Activated CD4-positive, alpha-beta memory T cell treated with anti-CD3 and anti-CD28 coated beads for 36 hours (primary cell): ENCODE measurements at regions of chr3 and their contacts with region 1.

Region 1: GRCh38 chr3:4834403-4834866 is 144.8 kb upstream of the BHLHE40 start:
- DNase-seq: peak; percentile 90
- H3K4me3 Mint-ChIP-seq: peak overlapping the region; percentile 49
- H3K27ac Mint-ChIP-seq: peak overlapping the region; percentile 84
- H3K4me1 Mint-ChIP-seq: peaks cover 86% of the 10 kb centered on the region
- H3K27me3 Mint-ChIP-seq: no peaks in the 10 kb centered on the region

Region 2: DNA sequence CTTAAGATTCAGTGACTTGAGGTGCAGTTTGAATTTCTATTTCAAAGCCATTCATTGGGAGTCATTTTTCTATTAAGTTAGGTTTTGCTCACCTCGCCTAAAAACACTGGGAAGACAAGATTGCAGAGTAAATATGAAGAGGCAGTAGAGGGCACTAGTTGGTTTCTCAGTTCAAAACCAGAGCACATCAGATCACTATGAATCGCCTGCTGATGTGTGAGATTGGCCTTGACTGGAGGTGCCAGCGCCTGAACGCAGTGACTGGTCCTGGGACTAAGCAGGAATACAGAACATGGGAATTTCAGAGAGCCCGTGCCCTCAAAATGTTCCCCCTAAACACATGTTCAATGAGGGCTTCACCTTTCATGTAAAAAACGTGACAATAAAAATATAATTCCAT is 112.3 kb before region 1 on chr3:
- CTCF ChIA-PET with region 1: interaction called, 3 read pairs
- POLR2A ChIA-PET with region 1: no interaction called
- intact Hi-C with region 1: loop called (anchors 5 kb)
- DNase-seq: peak; percentile 41
- H3K4me3 Mint-ChIP-seq: no peak overlapping the region
- H3K27ac Mint-ChIP-seq: no peak overlapping the region
- H3K4me1 Mint-ChIP-seq: peaks cover 19% of the 10 kb centered on the region
- H3K27me3 Mint-ChIP-seq: no peaks in the 10 kb centered on the region

Region 3: GRCh38 chr3:4807381-4808280 is 26.8 kb before region 1 on chr3:
- CTCF ChIA-PET with region 1: interaction called, 7 read pairs
- POLR2A ChIA-PET with region 1: interaction called, 9 read pairs
- intact Hi-C with region 1: loop called (anchors 1 kb)
- DNase-seq: no peak
- H3K4me3 Mint-ChIP-seq: peak overlapping the region; percentile 45
- H3K27ac Mint-ChIP-seq: peak overlapping the region; percentile 4
- H3K4me1 Mint-ChIP-seq: peaks cover 42% of the 10 kb centered on the region
- H3K27me3 Mint-ChIP-seq: no peaks in the 10 kb centered on the region

Region 4: GRCh38 chr3:4888913-4889846 is 54.7 kb after region 1 on chr3:
- CTCF ChIA-PET with region 1: no interaction called
- POLR2A ChIA-PET with region 1: interaction called, 3 read pairs
- intact Hi-C with region 1: loop called (anchors 1 kb)
- DNase-seq: peak; percentile 67
- H3K4me3 Mint-ChIP-seq: no peak overlapping the region
- H3K27ac Mint-ChIP-seq: peak overlapping the region; percentile 90
- H3K4me1 Mint-ChIP-seq: peaks cover 31% of the 10 kb centered on the region
- H3K27me3 Mint-ChIP-seq: no peaks in the 10 kb centered on the region

Region 5: GRCh38 chr3:5165698-5166097 is 331.3 kb after region 1 on chr3:
- CTCF ChIA-PET with region 1: no interaction called
- POLR2A ChIA-PET with region 1: no interaction called
- intact Hi-C with region 1: no loop called
- DNase-seq: no peak
- H3K4me3 Mint-ChIP-seq: no peak overlapping the region
- H3K27ac Mint-ChIP-seq: no peak overlapping the region
- H3K4me1 Mint-ChIP-seq: peaks cover 65% of the 10 kb centered on the region
- H3K27me3 Mint-ChIP-seq: no peaks in the 10 kb centered on the region

Region 6: DNA sequence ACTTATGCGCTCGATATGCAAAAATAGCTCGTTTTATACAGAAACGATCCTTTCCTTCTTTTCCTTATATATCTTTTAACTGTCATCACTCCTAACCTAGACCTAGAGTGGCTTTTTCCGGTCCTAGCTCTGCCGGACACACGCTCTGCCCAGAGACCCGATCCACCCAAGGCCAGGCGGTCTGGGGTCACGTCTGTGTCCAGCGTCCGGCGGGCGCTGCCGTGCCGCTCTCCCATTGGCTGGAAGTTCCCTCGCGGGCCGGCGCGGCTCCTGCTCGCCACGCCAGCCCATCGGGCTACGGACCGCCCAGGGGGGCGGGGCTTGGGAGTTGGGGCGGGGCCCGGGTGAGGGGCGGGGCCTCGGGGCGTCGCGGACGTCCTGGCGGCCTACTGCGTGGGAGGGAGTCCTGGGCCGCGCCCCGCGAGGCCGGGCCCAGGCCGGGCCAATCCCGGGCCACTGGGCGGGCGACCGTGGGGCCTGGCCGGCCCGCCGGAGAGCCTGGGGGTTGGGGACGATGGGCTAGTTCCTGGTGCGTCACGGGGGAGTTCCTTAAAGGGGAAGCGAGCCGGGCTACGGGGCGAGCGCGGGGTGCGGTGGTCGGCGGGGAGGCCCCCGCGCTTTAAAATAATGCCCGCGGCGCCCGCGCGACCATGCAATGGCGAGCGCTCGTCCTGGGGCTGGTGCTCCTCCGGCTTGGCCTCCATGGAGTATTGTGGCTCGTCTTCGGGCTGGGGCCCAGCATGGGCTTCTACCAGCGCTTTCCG is 352.9 kb after region 1 on chr3 and contains the start of gene EDEM1:
- CTCF ChIA-PET with region 1: no interaction called
- POLR2A ChIA-PET with region 1: interaction called, 3 read pairs
- intact Hi-C with region 1: loop called (anchors 1 kb)
- DNase-seq: peak; percentile 98
- H3K4me3 Mint-ChIP-seq: peak within 1 kb of the TSS; percentile 96
- H3K27ac Mint-ChIP-seq: peak within 1 kb of the TSS; percentile 98
- H3K4me1 Mint-ChIP-seq: peaks cover 27% of the 10 kb centered on the region
- H3K27me3 Mint-ChIP-seq: no peaks in the 10 kb centered on the region
- total RNA-seq, gene EDEM1: 192 to 203 TPM